Natural killer cell (primary cell): ENCODE measurements at regions of chr14 and their contacts with region 1.

Region 1: DNA sequence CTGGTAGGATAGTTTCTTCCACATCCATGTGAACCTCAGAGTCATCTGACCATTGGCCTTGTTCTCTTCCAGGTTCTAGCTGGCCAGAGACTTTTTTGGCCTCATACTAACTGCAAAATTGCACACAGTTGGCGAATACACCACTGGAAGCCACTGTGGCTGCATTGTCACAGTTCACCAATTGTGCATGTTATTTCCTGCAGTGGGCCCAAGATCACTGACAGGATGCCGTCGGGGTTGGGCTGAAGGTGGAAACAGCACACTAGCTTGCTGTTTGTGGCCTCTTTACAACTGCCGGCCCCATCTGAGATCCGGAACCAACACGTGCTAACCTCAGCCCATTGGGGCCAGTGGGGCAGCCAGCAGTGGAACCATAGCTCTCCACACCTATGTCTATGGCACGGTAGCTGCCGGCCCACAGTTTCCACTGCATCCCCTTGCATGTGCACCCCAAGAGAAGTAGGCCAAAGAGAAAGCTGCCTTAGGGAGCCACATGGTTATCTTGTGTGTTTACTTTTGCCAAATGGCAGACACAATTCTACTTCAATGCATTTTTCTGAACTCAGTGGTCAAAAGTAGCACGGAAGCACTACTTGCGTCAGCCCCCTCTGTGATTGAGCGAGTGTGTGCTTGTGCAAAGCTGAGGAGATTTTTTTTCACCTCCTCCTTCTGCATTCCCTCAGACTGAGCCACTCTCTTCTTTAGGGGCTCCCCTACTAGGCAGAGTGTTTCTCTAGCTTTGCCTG is 464.0 kb downstream of the RAD51B start:
- DNase-seq: peak; percentile 69 to 83
- ATAC-seq: peak; percentile 66 to 84 (median 83)
- H3K4me3 ChIP-seq: no peak overlapping the region
- H3K4me3 Mint-ChIP-seq: peak overlapping the region; percentile 68
- H3K27ac ChIP-seq: peak overlapping the region; percentile 91
- H3K27ac Mint-ChIP-seq: peak overlapping the region; percentile 86 to 96
- H3K4me1 ChIP-seq: peaks cover 61% of the 10 kb centered on the region
- H3K4me1 Mint-ChIP-seq: peaks cover 73 to 85% of the 10 kb centered on the region in 2 donors
- H3K27me3 ChIP-seq: no peaks in the 10 kb centered on the region
- H3K27me3 Mint-ChIP-seq: no peaks in the 10 kb centered on the region
- CTCF ChIP-seq: no peak

Region 2: GRCh38 chr14:67875175-67876006 is 408.2 kb before region 1 on chr14:
- intact Hi-C with region 1: loop called (anchors 10 kb)
- DNase-seq: peak in 1 of 2 donors; percentile 59
- ATAC-seq: peak; percentile 93 to 100 (median 98)
- H3K4me3 ChIP-seq: no peak overlapping the region
- H3K4me3 Mint-ChIP-seq: no peak overlapping the region
- H3K27ac ChIP-seq: peak overlapping the region; percentile 17
- H3K27ac Mint-ChIP-seq: no peak overlapping the region
- H3K4me1 ChIP-seq: peaks cover 11% of the 10 kb centered on the region
- H3K4me1 Mint-ChIP-seq: peaks cover 1 to 2% of the 10 kb centered on the region in 2 donors
- H3K27me3 ChIP-seq: no peaks in the 10 kb centered on the region
- H3K27me3 Mint-ChIP-seq: no peaks in the 10 kb centered on the region
- CTCF ChIP-seq: no peak

Region 3: DNA sequence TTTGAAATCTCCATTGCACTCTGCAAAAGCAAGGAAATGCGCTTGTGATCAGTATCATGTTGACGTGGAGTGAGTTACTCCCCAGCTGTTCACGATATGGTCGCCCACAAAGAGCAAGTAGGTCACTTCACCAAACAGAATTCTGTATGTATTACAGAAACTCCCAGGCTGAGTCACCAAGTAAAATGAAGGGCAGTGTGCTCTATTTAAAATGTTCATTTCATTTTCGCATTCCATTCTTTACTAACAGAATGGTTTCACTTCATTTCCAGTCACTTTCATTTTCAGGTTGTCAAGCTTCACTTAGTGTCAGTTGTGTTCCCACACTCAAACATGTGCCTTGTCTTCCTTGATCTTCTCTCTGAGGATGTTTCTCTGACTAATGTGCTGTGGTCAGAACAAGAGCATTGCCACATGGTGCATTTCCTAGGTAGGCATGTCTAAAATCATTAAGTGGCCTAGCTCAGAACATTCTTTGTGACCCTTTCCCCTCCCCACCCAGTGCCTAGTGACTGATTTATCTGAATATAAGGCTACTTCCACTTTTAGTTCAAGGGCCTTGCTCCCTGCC is 72.7 kb before region 1 on chr14:
- intact Hi-C with region 1: loop called (anchors 1 kb)
- DNase-seq: peak; percentile 38 to 75
- ATAC-seq: peak; percentile 89 to 93 (median 90)
- H3K4me3 ChIP-seq: peak overlapping the region; percentile 19
- H3K4me3 Mint-ChIP-seq: peak overlapping the region; percentile 89
- H3K27ac ChIP-seq: peak overlapping the region; percentile 92
- H3K27ac Mint-ChIP-seq: peak overlapping the region; percentile 89 to 97
- H3K4me1 ChIP-seq: peaks cover 30% of the 10 kb centered on the region
- H3K4me1 Mint-ChIP-seq: peaks cover 74 to 76% of the 10 kb centered on the region in 2 donors
- H3K27me3 ChIP-seq: no peaks in the 10 kb centered on the region
- H3K27me3 Mint-ChIP-seq: no peaks in the 10 kb centered on the region
- CTCF ChIP-seq: no peak

Region 4: GRCh38 chr14:68232300-68233055 is 51.1 kb before region 1 on chr14:
- intact Hi-C with region 1: no loop called
- DNase-seq: no peak
- ATAC-seq: no peak
- H3K4me3 ChIP-seq: no peak overlapping the region
- H3K4me3 Mint-ChIP-seq: no peak overlapping the region
- H3K27ac ChIP-seq: no peak overlapping the region
- H3K27ac Mint-ChIP-seq: no peak overlapping the region
- H3K4me1 ChIP-seq: no peaks in the 10 kb centered on the region
- H3K4me1 Mint-ChIP-seq: no peaks in the 10 kb centered on the region
- H3K27me3 ChIP-seq: no peaks in the 10 kb centered on the region
- H3K27me3 Mint-ChIP-seq: no peaks in the 10 kb centered on the region
- CTCF ChIP-seq: no peak

Region 5: GRCh38 chr14:68268197-68268596 is 15.4 kb before region 1 on chr14:
- intact Hi-C with region 1: loop called (anchors 1 kb)
- DNase-seq: peak in 1 of 2 donors; percentile 51
- ATAC-seq: peak; percentile 16 to 41 (median 25)
- H3K4me3 ChIP-seq: no peak overlapping the region
- H3K4me3 Mint-ChIP-seq: peak overlapping the region; percentile 80
- H3K27ac ChIP-seq: peak overlapping the region; percentile 76
- H3K27ac Mint-ChIP-seq: peak overlapping the region; percentile 92 to 93
- H3K4me1 ChIP-seq: peaks cover 26% of the 10 kb centered on the region
- H3K4me1 Mint-ChIP-seq: peaks cover 48 to 52% of the 10 kb centered on the region in 2 donors
- H3K27me3 ChIP-seq: no peaks in the 10 kb centered on the region
- H3K27me3 Mint-ChIP-seq: no peaks in the 10 kb centered on the region
- CTCF ChIP-seq: no peak

Region 6: GRCh38 chr14:68377459-68377858 is 93.9 kb after region 1 on chr14:
- intact Hi-C with region 1: loop called (anchors 5 kb)
- DNase-seq: peak in 1 of 2 donors; percentile 37
- ATAC-seq: peak in 2 of 3 donors; percentile 32 to 35
- H3K4me3 ChIP-seq: no peak overlapping the region
- H3K4me3 Mint-ChIP-seq: peak overlapping the region; percentile 50
- H3K27ac ChIP-seq: peak overlapping the region; percentile 52
- H3K27ac Mint-ChIP-seq: peak overlapping the region; percentile 65 to 70
- H3K4me1 ChIP-seq: peaks cover 11% of the 10 kb centered on the region
- H3K4me1 Mint-ChIP-seq: peaks cover 44 to 46% of the 10 kb centered on the region in 2 donors
- H3K27me3 ChIP-seq: no peaks in the 10 kb centered on the region
- H3K27me3 Mint-ChIP-seq: no peaks in the 10 kb centered on the region
- CTCF ChIP-seq: no peak

Region 7: GRCh38 chr14:68408680-68409079 is 125.1 kb after region 1 on chr14:
- intact Hi-C with region 1: loop called (anchors 10 kb)
- DNase-seq: peak in 1 of 2 donors; percentile 61
- ATAC-seq: peak; percentile 58 to 82 (median 66)
- H3K4me3 ChIP-seq: no peak overlapping the region
- H3K4me3 Mint-ChIP-seq: no peak overlapping the region
- H3K27ac ChIP-seq: no peak overlapping the region
- H3K27ac Mint-ChIP-seq: peak overlapping the region; percentile 35 to 39
- H3K4me1 ChIP-seq: peaks cover 25% of the 10 kb centered on the region
- H3K4me1 Mint-ChIP-seq: peaks cover 36 to 37% of the 10 kb centered on the region in 2 donors
- H3K27me3 ChIP-seq: no peaks in the 10 kb centered on the region
- H3K27me3 Mint-ChIP-seq: no peaks in the 10 kb centered on the region
- CTCF ChIP-seq: no peak

Region 8: DNA sequence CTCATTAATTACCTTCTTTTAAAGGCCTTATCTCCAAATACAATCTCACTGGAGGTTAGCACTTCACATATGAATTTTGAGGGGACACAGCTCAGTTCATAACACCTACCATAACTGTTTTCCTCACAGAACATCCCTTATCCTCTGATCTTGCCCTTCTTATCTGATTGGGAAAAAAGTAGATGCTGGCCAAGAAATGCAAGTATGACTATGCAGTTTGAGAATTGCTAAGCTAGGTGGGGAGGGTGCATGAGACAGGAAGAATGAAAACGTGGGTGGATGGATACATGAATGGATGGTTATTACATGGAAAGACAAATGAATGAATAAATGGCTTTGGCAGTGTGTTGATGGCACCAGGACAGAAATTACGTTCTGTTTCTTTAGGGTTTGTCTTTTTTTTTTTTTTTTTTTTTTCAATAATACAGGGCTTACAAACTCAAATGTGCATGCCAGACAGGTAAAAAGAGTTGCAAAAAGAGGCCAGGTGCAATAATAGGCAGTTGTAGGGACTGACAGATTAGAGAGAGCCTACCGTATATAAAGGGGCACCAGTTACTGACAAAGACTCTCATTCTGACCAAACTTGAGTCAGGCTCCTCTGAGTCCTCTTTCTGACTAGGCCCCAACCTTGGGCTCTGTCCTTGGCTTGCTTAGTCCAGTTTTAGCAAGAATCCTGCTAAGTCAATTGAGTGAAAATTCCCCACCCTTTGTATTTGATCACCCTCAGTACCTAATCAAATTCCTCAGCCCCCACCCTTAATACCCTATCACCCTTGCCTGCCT is 204.4 kb after region 1 on chr14:
- intact Hi-C with region 1: loop called (anchors 10 kb)
- DNase-seq: no peak
- ATAC-seq: no peak
- H3K4me3 ChIP-seq: no peak overlapping the region
- H3K4me3 Mint-ChIP-seq: no peak overlapping the region
- H3K27ac ChIP-seq: no peak overlapping the region
- H3K27ac Mint-ChIP-seq: no peak overlapping the region
- H3K4me1 ChIP-seq: peaks cover 18% of the 10 kb centered on the region
- H3K4me1 Mint-ChIP-seq: peaks cover 26 to 38% of the 10 kb centered on the region in 2 donors
- H3K27me3 ChIP-seq: no peaks in the 10 kb centered on the region
- H3K27me3 Mint-ChIP-seq: peaks cover 0 to 3% of the 10 kb centered on the region in 2 donors
- CTCF ChIP-seq: no peak